ENCODE measurements at regions of chr1 and their contacts with region 1.

Region 1: GRCh38 chr1:155250633-155251449 is 4.4 kb downstream of the ENTREP3 start:
- DNase-seq: peak; percentile 95 to 98
- ATAC-seq: peak; percentile 91
- H3K4me3 ChIP-seq: no peak overlapping the region
- H3K27ac ChIP-seq: no peak overlapping the region
- H3K4me1 ChIP-seq: no peaks in the 10 kb centered on the region
- H3K27me3 ChIP-seq: no peaks in the 10 kb centered on the region

Region 2: GRCh38 chr1:155591770-155592169 is 340.9 kb after region 1 on chr1:
- intact Hi-C with region 1: loop called (anchors 5 kb)
- DNase-seq: no peak
- ATAC-seq: peak; percentile 69
- H3K4me3 ChIP-seq: no peak overlapping the region
- H3K27ac ChIP-seq: no peak overlapping the region
- H3K4me1 ChIP-seq: no peaks in the 10 kb centered on the region
- H3K27me3 ChIP-seq: no peaks in the 10 kb centered on the region

Region 3: DNA sequence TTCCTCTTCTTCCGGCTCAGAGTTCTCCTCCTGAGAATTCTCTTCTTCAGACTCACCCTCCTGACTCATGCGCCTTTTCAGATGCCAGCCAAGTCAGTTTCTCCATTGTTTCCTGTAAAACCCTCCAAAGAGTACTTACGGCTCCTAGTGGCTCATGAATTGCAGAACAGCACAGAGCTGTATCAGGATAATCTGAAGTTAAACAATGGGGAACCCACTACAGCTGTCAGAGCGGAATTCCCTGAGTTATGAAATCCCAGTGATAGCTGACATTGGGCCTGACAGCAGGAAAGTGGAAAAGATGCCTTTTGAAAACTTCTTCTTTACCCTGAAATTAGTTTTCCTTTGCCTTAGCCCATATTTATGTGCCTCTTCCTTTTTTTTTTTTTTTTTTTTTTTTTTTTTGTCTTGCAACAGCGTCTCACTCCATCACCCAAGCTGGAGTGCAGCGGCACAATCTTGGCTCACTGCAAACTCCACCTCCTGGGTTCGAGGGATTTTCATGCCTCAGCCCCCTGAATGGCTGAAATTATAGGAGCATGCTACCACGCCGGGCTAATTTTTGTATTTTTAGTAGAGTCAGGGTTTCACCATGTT is 397.8 kb after region 1 on chr1:
- intact Hi-C with region 1: loop called in 1 of 2 experiments (anchors 10 kb)
- DNase-seq: peak in 1 of 2 donors; percentile 47
- ATAC-seq: peak; percentile 88
- H3K4me3 ChIP-seq: no peak overlapping the region
- H3K27ac ChIP-seq: peak overlapping the region in 1 of 2 donors; percentile 62
- H3K4me1 ChIP-seq: no peaks in the 10 kb centered on the region
- H3K27me3 ChIP-seq: no peaks in the 10 kb centered on the region

Measured in aorta (tissue), 5 donors.